HAP-1 (cell line): ENCODE measurements at regions of chr17 and their contacts with region 1.

Region 1: GRCh38 chr17:32755045-32755805 is 121.7 kb downstream of the MYO1D start:
- DNase-seq: peak in 1 of 2 experiments; percentile 75
- H3K4me3 ChIP-seq: no peak overlapping the region
- H3K4me1 ChIP-seq: no peaks in the 10 kb centered on the region
- H3K27me3 ChIP-seq: no peaks in the 10 kb centered on the region

Region 2: GRCh38 chr17:32486111-32486700 is 269.0 kb before region 1 on chr17:
- in situ Hi-C with region 1: loop called (anchors 10 kb)
- DNase-seq: peak; percentile 77 to 80
- H3K4me3 ChIP-seq: peak overlapping the region; percentile 28
- H3K4me1 ChIP-seq: peaks cover 8% of the 10 kb centered on the region
- H3K27me3 ChIP-seq: no peaks in the 10 kb centered on the region

Region 3: GRCh38 chr17:32664936-32665583 is 90.2 kb before region 1 on chr17:
- in situ Hi-C with region 1: no loop called
- DNase-seq: no peak
- H3K4me3 ChIP-seq: no peak overlapping the region
- H3K4me1 ChIP-seq: no peaks in the 10 kb centered on the region
- H3K27me3 ChIP-seq: no peaks in the 10 kb centered on the region